Activated B cell treated with CpG ODN at 0.5 μM for 24 hours (primary cell): ENCODE measurements at regions of chrX and their contacts with region 1.

Region 1: GRCh38 chrX:47658684-47659515 is at the start of gene UXT:
- DNase-seq: peak; percentile 82
- ATAC-seq: peak; percentile 85
- H3K4me3 Mint-ChIP-seq: peak within 1 kb of the TSS; percentile 91
- H3K27ac Mint-ChIP-seq: peak within 1 kb of the TSS; percentile 99
- H3K4me1 Mint-ChIP-seq: peaks cover 18% of the 10 kb centered on the region
- H3K27me3 Mint-ChIP-seq: no peaks in the 10 kb centered on the region
- CTCF ChIP-seq: no peak
- total RNA-seq, gene UXT: 184 and 201 TPM in 2 replicates

Region 2: GRCh38 chrX:47482512-47483309 is 176.2 kb before region 1 on chrX and contains the start of gene ZNF41:
- CTCF ChIA-PET with region 1: no interaction called
- POLR2A ChIA-PET with region 1: no interaction called
- intact Hi-C with region 1: loop called (anchors 2 kb)
- DNase-seq: peak; percentile 63
- ATAC-seq: peak; percentile 78
- H3K4me3 Mint-ChIP-seq: peak within 1 kb of the TSS; percentile 90
- H3K27ac Mint-ChIP-seq: peak within 1 kb of the TSS; percentile 92
- H3K4me1 Mint-ChIP-seq: peaks cover 42% of the 10 kb centered on the region
- H3K27me3 Mint-ChIP-seq: no peaks in the 10 kb centered on the region
- CTCF ChIP-seq: no peak
- total RNA-seq, gene ZNF41: 15.4 and 19.2 TPM in 2 replicates

Region 3: GRCh38 chrX:47836164-47837072 is 177.5 kb after region 1 on chrX and contains the start of gene ZNF81:
- CTCF ChIA-PET with region 1: no interaction called
- POLR2A ChIA-PET with region 1: no interaction called
- intact Hi-C with region 1: loop called (anchors 2 kb)
- DNase-seq: peak; percentile 76
- ATAC-seq: peak; percentile 95
- H3K4me3 Mint-ChIP-seq: peak within 1 kb of the TSS; percentile 93
- H3K27ac Mint-ChIP-seq: peak within 1 kb of the TSS; percentile 93
- H3K4me1 Mint-ChIP-seq: peaks cover 21% of the 10 kb centered on the region
- H3K27me3 Mint-ChIP-seq: no peaks in the 10 kb centered on the region
- CTCF ChIP-seq: no peak
- total RNA-seq, gene ZNF81: 11.0 and 15.3 TPM in 2 replicates

Region 4: DNA sequence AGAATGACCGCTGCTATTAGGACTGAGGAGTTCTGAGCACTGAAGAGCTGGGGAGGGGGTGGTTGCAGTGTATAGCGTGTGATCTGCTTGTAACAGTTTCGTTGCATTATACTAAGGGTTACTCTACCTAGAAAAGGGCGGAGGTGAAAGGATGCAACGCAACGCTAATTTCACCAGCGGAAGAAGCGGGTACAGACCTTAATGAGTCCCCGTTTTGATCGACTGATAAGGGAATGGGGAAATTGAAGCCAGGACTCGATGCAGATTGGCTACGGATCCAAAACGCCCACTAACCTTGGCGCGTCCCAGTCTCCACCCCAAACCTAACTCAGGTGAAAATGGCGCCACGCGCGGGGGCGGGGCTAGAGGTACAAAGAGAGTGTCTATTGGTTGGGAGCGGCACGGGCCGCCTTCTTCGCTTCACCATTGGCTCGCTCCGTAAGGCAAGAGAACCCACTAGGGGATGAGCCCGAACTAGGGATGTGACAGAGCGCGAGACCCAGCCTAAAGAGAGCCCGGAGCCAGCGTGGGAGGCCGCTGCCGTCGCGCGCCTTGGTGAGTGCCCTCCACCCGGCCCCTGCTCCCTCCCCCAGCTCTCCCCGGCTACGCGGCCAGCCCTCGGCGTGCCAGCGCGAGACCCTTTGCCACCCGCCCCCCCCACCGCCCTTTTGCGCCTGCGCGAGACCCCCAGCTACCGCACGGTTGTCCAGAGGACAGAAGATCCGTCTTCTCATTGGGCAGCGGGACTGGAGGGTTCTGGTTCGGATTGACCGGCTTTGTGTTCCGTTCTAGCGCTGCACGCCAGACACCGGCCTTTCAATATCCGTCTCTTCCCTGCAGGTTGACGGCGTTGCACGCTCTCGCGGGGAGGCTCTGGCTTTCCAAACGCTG is 862.7 kb after region 1 on chrX and contains the start of gene EBP:
- CTCF ChIA-PET with region 1: no interaction called
- POLR2A ChIA-PET with region 1: no interaction called
- intact Hi-C with region 1: loop called (anchors 2 kb)
- DNase-seq: peak; percentile 79
- ATAC-seq: peak; percentile 96
- H3K4me3 Mint-ChIP-seq: peak within 1 kb of the TSS; percentile 86
- H3K27ac Mint-ChIP-seq: peak within 1 kb of the TSS; percentile 88
- H3K4me1 Mint-ChIP-seq: peaks cover 24% of the 10 kb centered on the region
- H3K27me3 Mint-ChIP-seq: no peaks in the 10 kb centered on the region
- CTCF ChIP-seq: no peak
- total RNA-seq, gene EBP: 72.4 and 75.5 TPM in 2 replicates